CD8-positive, alpha-beta T cell (primary cell): ENCODE measurements at regions of chr18 and their contacts with region 1.

Region 1: GRCh38 chr18:63320046-63320689 is 599 bp upstream of the BCL2 start:
- DNase-seq: peak; percentile 73 to 95 (median 88)
- ATAC-seq: peak; percentile 80
- H3K4me3 ChIP-seq: peak overlapping the region; percentile 53 to 56
- H3K4me3 Mint-ChIP-seq: peak overlapping the region; percentile 88
- H3K27ac ChIP-seq: peak overlapping the region in 1 of 2 experiments; percentile 29
- H3K27ac Mint-ChIP-seq: peak overlapping the region; percentile 94
- H3K4me1 ChIP-seq: peaks cover 16% of the 10 kb centered on the region
- H3K4me1 Mint-ChIP-seq: peaks cover 42% of the 10 kb centered on the region
- H3K27me3 ChIP-seq: no peaks in the 10 kb centered on the region
- H3K27me3 Mint-ChIP-seq: no peaks in the 10 kb centered on the region
- CTCF ChIP-seq: no peak

Region 2: GRCh38 chr18:61754039-61754583 is 1566.1 kb before region 1 on chr18:
- CTCF ChIA-PET with region 1: no interaction called
- POLR2A ChIA-PET with region 1: no interaction called
- intact Hi-C with region 1: no loop called
- DNase-seq: no peak
- ATAC-seq: no peak
- H3K4me3 ChIP-seq: no peak overlapping the region
- H3K4me3 Mint-ChIP-seq: no peak overlapping the region
- H3K27ac ChIP-seq: no peak overlapping the region
- H3K27ac Mint-ChIP-seq: no peak overlapping the region
- H3K4me1 ChIP-seq: no peaks in the 10 kb centered on the region
- H3K4me1 Mint-ChIP-seq: no peaks in the 10 kb centered on the region
- H3K27me3 ChIP-seq: no peaks in the 10 kb centered on the region
- H3K27me3 Mint-ChIP-seq: peaks cover 6% of the 10 kb centered on the region
- CTCF ChIP-seq: no peak

Region 3: DNA sequence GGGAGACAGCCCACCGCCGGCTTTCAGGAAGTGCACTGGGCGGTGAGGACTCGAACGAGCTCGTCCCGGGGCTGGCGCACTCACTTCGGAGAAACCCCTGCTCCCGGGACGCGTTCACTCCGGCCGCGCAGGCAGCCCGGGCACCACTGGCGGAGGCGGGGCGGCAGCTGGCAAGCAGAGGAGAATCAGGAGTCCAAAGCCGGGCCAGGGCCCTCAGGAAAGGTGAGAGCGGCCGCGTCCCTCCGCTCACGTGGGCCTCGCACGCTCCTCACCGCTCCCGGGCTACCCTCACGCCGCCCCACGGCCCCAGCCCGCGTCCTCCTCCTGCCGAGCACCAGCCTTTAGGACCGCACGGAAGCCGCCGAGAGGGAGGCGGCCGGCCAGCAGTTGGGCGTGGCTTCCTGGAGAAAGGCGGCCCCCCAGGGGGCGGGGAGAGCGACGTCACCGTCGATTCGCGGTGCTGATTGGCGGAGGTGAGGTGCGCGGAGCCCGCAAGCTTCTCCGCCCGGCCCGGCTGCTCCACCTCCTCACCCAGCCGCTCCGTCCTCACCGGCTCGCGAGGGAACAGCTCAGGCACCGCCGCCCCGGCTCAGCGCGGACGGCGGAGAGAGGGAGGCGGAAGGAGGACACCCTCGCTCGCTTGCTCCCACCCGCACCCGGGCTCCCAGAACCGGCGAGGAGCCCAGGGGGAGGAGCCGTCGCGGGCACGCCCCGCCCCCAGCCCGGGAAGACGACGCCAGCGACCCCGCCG is 797.5 kb before region 1 on chr18 and contains the start of gene ZCCHC2:
- CTCF ChIA-PET with region 1: no interaction called
- POLR2A ChIA-PET with region 1: no interaction called
- intact Hi-C with region 1: loop called in 1 of 2 experiments (anchors 5 kb)
- DNase-seq: peak; percentile 95 to 100 (median 98)
- ATAC-seq: peak; percentile 77
- H3K4me3 ChIP-seq: peak within 1 kb of the TSS; percentile 88 to 89
- H3K4me3 Mint-ChIP-seq: peak within 1 kb of the TSS; percentile 95
- H3K27ac ChIP-seq: peak within 1 kb of the TSS; percentile 86 to 89
- H3K27ac Mint-ChIP-seq: peak within 1 kb of the TSS; percentile 89
- H3K4me1 ChIP-seq: peaks cover 32% of the 10 kb centered on the region
- H3K4me1 Mint-ChIP-seq: peaks cover 37% of the 10 kb centered on the region
- H3K27me3 ChIP-seq: no peaks in the 10 kb centered on the region
- H3K27me3 Mint-ChIP-seq: no peaks in the 10 kb centered on the region
- CTCF ChIP-seq: no peak
- total RNA-seq, gene ZCCHC2: 88.7 to 90.9 TPM

Region 4: GRCh38 chr18:63131106-63131958 is 188.8 kb before region 1 on chr18:
- CTCF ChIA-PET with region 1: interaction called, 78 read pairs
- POLR2A ChIA-PET with region 1: interaction called, 4 read pairs
- intact Hi-C with region 1: loop called (anchors 1 kb)
- DNase-seq: peak; percentile 32 to 78 (median 63)
- ATAC-seq: peak; percentile 76
- H3K4me3 ChIP-seq: no peak overlapping the region
- H3K4me3 Mint-ChIP-seq: no peak overlapping the region
- H3K27ac ChIP-seq: no peak overlapping the region
- H3K27ac Mint-ChIP-seq: peak overlapping the region; percentile 77
- H3K4me1 ChIP-seq: peaks cover 31% of the 10 kb centered on the region
- H3K4me1 Mint-ChIP-seq: peaks cover 30% of the 10 kb centered on the region
- H3K27me3 ChIP-seq: no peaks in the 10 kb centered on the region
- H3K27me3 Mint-ChIP-seq: no peaks in the 10 kb centered on the region
- CTCF ChIP-seq: peak; percentile 71

Region 5: GRCh38 chr18:63161761-63162195 is 158.4 kb before region 1 on chr18:
- CTCF ChIA-PET with region 1: interaction called, 70 read pairs
- POLR2A ChIA-PET with region 1: interaction called, 23 read pairs
- intact Hi-C with region 1: loop called in 1 of 2 experiments (anchors 1 kb)
- DNase-seq: peak; percentile 51 to 94 (median 78)
- ATAC-seq: peak; percentile 85
- H3K4me3 ChIP-seq: peak overlapping the region; percentile 17 to 30
- H3K4me3 Mint-ChIP-seq: peak overlapping the region; percentile 65
- H3K27ac ChIP-seq: peak overlapping the region; percentile 81 to 99
- H3K27ac Mint-ChIP-seq: peak overlapping the region; percentile 98
- H3K4me1 ChIP-seq: peaks cover 77% of the 10 kb centered on the region
- H3K4me1 Mint-ChIP-seq: peaks cover 91% of the 10 kb centered on the region
- H3K27me3 ChIP-seq: no peaks in the 10 kb centered on the region
- H3K27me3 Mint-ChIP-seq: no peaks in the 10 kb centered on the region
- CTCF ChIP-seq: no peak

Region 6: GRCh38 chr18:63224630-63225029 is 95.5 kb before region 1 on chr18:
- CTCF ChIA-PET with region 1: interaction called, 10 read pairs
- POLR2A ChIA-PET with region 1: interaction called, 4 read pairs
- intact Hi-C with region 1: loop called (anchors 5 kb)
- DNase-seq: peak in 5 of 9 experiments; percentile 34 to 47 (median 38)
- ATAC-seq: peak; percentile 78
- H3K4me3 ChIP-seq: peak overlapping the region in 1 of 2 experiments; percentile 10
- H3K4me3 Mint-ChIP-seq: peak overlapping the region; percentile 20
- H3K27ac ChIP-seq: peak overlapping the region; percentile 17 to 25
- H3K27ac Mint-ChIP-seq: peak overlapping the region; percentile 84
- H3K4me1 ChIP-seq: peaks cover 75% of the 10 kb centered on the region
- H3K4me1 Mint-ChIP-seq: peaks cover 70% of the 10 kb centered on the region
- H3K27me3 ChIP-seq: no peaks in the 10 kb centered on the region
- H3K27me3 Mint-ChIP-seq: no peaks in the 10 kb centered on the region
- CTCF ChIP-seq: no peak

Region 7: DNA sequence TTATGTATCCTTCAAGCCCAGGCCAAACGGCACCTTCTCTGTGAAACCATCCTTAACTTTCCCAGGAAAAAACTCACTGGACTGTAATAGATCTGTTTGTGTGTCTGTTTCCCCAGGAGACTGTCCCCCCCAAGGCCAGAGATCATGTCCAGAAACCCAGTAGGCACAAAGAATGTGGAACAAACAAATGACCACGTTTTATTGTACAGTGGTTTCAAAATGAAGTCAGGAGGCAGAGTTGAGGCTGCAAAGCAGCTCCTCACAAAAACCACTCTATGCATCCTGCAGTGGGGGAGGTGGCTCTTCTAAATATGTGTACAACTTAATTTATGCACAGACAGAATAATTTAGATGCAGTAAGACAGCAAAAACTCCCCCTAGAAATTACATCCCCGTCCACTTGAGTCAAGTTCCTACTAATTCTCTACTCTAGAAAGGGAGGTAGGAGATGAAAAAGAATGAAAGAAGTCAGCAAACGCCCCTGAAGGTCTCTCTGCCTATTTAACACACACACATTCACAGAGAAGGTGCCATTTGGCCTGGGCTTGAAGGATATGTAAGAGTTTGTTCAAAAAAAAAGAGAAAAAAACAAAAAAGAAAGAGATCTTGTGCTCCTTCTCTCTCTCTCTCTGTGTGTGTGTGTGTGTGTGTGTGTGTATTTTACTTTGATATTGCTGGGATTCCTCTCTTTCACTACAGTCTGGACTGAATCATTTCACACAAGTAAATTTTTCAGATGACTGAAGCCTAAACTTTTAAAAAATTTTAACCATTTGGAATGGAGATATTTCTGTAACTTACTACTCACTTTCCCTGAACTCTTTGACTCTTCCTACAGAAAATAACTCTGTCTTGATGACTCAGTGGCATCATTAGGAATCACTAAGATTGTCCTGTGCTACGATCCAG is 20.1 kb before region 1 on chr18:
- CTCF ChIA-PET with region 1: interaction called, 44 read pairs
- POLR2A ChIA-PET with region 1: interaction called, 8 read pairs
- intact Hi-C with region 1: loop called (anchors 1 to 2 kb)
- DNase-seq: peak in 3 of 9 experiments; percentile 38 to 60 (median 39)
- ATAC-seq: peak; percentile 59
- H3K4me3 ChIP-seq: no peak overlapping the region
- H3K4me3 Mint-ChIP-seq: peak overlapping the region; percentile 43
- H3K27ac ChIP-seq: peak overlapping the region; percentile 4 to 67
- H3K27ac Mint-ChIP-seq: peak overlapping the region; percentile 86
- H3K4me1 ChIP-seq: peaks cover 71% of the 10 kb centered on the region
- H3K4me1 Mint-ChIP-seq: peaks cover 75% of the 10 kb centered on the region
- H3K27me3 ChIP-seq: no peaks in the 10 kb centered on the region
- H3K27me3 Mint-ChIP-seq: no peaks in the 10 kb centered on the region
- CTCF ChIP-seq: no peak

Region 8: DNA sequence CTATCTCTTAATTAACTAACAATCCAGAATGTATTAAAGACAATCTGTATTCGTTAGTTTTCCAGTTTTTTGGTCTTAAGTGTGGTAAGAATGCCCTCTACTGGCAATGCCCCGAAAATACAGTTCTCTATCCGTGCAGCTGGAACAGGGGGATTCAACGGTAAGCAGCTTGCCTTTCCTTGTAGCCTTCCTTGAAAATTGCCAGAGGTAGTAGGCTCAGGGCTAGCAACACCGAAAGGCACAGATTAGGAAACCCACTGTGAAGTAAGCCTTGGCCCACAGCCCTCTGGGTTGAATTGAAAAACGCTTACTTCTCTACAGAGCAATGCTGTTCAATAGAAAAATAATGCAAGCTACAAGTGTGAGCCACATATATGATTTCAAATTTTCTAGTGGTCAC is 119.2 kb after region 1 on chr18:
- CTCF ChIA-PET with region 1: interaction called, 23 read pairs
- POLR2A ChIA-PET with region 1: no interaction called
- intact Hi-C with region 1: loop called (anchors 1 to 5 kb)
- DNase-seq: peak; percentile 3 to 75 (median 48)
- ATAC-seq: peak; percentile 84
- H3K4me3 ChIP-seq: no peak overlapping the region
- H3K4me3 Mint-ChIP-seq: no peak overlapping the region
- H3K27ac ChIP-seq: no peak overlapping the region
- H3K27ac Mint-ChIP-seq: no peak overlapping the region
- H3K4me1 ChIP-seq: no peaks in the 10 kb centered on the region
- H3K4me1 Mint-ChIP-seq: no peaks in the 10 kb centered on the region
- H3K27me3 ChIP-seq: no peaks in the 10 kb centered on the region
- H3K27me3 Mint-ChIP-seq: peaks cover 10% of the 10 kb centered on the region
- CTCF ChIP-seq: peak; percentile 94